HEK293 (cell line): ENCODE measurements at regions of chr5 and their contacts with region 1.

Region 1: GRCh38 chr5:129767906-129768380 is 20.0 kb downstream of the MINAR2 start:
- H3K4me3 ChIP-seq: no peak overlapping the region
- H3K27ac ChIP-seq: no peak overlapping the region
- H3K4me1 ChIP-seq: no peaks in the 10 kb centered on the region
- CTCF ChIP-seq: peak; percentile 94

Region 2: GRCh38 chr5:128905571-128906110 is 862.3 kb before region 1 on chr5:
- CTCF ChIA-PET with region 1: interaction called, 11 read pairs
- POLR2A ChIA-PET with region 1: no interaction called
- H3K4me3 ChIP-seq: no peak overlapping the region
- H3K27ac ChIP-seq: no peak overlapping the region
- H3K4me1 ChIP-seq: no peaks in the 10 kb centered on the region
- CTCF ChIP-seq: no peak

Region 3: GRCh38 chr5:129664337-129664937 is 103.5 kb before region 1 on chr5:
- CTCF ChIA-PET with region 1: interaction called, 11 read pairs
- POLR2A ChIA-PET with region 1: no interaction called
- H3K4me3 ChIP-seq: no peak overlapping the region
- H3K27ac ChIP-seq: no peak overlapping the region
- H3K4me1 ChIP-seq: no peaks in the 10 kb centered on the region
- CTCF ChIP-seq: no peak

Region 4: GRCh38 chr5:129670957-129671500 is 96.9 kb before region 1 on chr5:
- CTCF ChIA-PET with region 1: interaction called, 10 read pairs
- POLR2A ChIA-PET with region 1: interaction called, 3 read pairs
- H3K4me3 ChIP-seq: no peak overlapping the region
- H3K27ac ChIP-seq: no peak overlapping the region
- H3K4me1 ChIP-seq: no peaks in the 10 kb centered on the region
- CTCF ChIP-seq: no peak

Region 5: DNA sequence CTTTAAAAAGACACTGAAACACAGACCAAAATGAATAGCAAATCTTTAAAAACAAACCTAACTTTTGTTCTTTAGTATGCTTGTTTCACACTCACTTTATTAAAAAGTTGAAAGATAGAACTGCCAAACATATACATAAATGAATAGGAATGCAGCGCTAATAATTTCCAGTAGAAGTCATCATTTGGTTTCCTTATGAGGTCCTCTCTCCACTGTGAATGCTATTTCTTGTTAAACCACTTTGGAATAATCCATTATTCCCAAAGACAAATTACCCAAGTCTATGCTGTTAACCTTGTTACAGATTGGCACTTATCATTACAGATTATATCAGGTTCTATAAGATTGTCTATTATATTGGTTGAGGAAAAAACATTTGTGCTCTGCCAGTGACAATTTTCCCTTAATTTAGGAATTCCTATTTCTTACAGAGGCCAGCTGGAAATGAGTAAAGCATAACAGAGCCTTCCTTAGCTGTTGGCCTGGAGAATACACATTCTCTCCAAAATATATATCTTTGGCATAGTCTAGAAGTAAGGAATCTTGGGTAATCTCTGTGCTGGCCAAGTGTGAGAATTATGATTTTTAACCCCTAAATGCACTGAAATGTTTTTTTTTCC is 49.4 kb before region 1 on chr5:
- CTCF ChIA-PET with region 1: no interaction called
- POLR2A ChIA-PET with region 1: no interaction called
- H3K4me3 ChIP-seq: no peak overlapping the region
- H3K27ac ChIP-seq: no peak overlapping the region
- H3K4me1 ChIP-seq: no peaks in the 10 kb centered on the region
- CTCF ChIP-seq: no peak

Region 6: DNA sequence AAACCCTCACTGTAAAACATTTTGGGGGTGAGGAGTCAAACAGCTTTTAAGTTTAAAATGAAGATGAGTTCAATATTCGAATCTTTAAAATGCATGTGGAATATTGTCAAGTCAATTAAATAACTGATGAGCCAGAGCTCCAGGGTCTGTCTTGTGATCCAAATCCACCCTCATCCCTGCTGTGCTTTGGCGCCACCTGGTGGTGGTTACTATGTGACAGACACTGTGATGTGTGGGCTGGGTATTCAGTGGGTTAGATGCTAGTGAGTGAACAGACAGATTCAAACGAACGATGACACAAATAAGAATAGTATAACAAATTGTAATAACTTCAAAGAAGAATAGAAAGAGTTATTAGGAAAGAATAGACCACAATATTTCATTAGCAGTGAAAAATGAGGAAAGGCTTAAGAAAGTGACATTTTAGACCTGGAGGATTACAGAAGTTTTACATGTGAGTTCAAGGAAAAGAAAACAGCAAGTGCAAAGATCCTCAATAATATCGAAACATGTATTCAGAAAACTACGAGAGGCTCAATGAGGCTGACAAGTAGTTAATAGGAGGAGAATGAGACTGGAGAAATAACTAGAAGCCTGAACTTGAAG is 84.9 kb after region 1 on chr5:
- CTCF ChIA-PET with region 1: interaction called, 256 read pairs
- POLR2A ChIA-PET with region 1: interaction called, 4 read pairs
- H3K4me3 ChIP-seq: no peak overlapping the region
- H3K27ac ChIP-seq: no peak overlapping the region
- H3K4me1 ChIP-seq: no peaks in the 10 kb centered on the region
- CTCF ChIP-seq: peak; percentile 49; the same call in 1 of the 2 replicates

Region 7: GRCh38 chr5:129963359-129963758 is 195.4 kb after region 1 on chr5:
- CTCF ChIA-PET with region 1: no interaction called
- POLR2A ChIA-PET with region 1: no interaction called
- H3K4me3 ChIP-seq: no peak overlapping the region
- H3K27ac ChIP-seq: no peak overlapping the region
- H3K4me1 ChIP-seq: no peaks in the 10 kb centered on the region
- CTCF ChIP-seq: no peak

Region 8: GRCh38 chr5:130141659-130142320 is 373.8 kb after region 1 on chr5:
- CTCF ChIA-PET with region 1: interaction called, 36 read pairs
- POLR2A ChIA-PET with region 1: no interaction called
- H3K4me3 ChIP-seq: no peak overlapping the region
- H3K27ac ChIP-seq: no peak overlapping the region
- H3K4me1 ChIP-seq: peaks cover 3% of the 10 kb centered on the region; the same call in 1 of the 2 replicates
- CTCF ChIP-seq: peak; percentile 41; the same call in 1 of the 2 replicates

Region 9: DNA sequence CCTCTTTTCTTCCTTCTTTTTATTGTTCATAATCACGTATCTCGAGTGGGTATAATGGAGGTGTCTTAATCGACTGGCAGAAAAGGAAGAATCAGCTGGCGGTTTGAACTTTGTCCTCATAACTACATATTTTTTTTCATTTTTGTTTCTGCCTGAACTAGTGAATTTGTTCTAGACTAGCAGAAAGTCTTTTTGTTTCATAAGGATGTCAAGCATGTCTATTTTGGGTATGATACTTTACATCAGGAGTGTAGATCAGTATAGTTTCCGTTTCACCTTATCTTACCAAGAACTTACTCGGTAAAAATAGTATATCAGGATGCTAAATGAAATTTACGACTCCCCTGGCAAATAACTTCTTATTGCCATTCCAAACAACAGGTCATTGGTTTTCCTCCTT is 415.2 kb after region 1 on chr5:
- CTCF ChIA-PET with region 1: no interaction called
- POLR2A ChIA-PET with region 1: no interaction called
- H3K4me3 ChIP-seq: no peak overlapping the region
- H3K27ac ChIP-seq: no peak overlapping the region
- H3K4me1 ChIP-seq: no peaks in the 10 kb centered on the region
- CTCF ChIP-seq: no peak